ENCODE measurements at regions of chr3 and their contacts with region 1.

Region 1: DNA sequence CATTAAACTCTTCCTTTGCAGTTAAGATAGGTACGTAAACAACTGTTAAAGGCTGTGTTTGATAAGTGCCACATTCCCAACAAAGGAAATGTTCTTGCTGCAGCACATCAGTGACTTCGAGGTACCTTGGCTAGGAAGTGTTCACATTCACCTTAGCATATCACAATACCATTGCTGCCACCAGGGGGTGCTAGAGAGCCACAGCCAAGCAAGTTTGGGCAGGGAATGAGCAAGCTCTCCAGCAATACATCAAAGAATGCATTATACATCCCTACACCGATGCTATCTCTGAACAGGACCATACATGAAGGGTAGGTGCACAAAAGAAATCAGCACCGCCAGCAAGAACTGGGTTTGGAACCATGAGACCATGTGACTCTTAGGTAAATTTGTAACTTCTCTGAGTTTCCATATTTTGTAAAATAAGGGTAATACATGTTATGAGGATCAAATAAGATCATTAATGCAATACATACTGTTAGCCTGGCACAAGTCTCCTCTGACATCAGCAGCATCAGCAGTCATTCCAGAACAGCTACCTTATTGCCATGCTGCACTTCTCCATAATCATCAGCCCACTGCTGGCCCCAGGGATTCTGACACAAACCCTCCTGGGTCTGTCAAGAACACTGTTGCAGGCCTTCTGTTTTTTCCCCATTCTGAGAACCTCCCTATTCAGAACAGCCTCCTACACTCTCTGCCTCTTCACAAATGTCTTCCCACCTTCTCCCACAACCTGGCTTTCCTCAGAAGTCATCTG is 37.6 kb downstream of the RYK start:
- DNase-seq: peak; percentile 95
- H3K4me3 Mint-ChIP-seq: no peak overlapping the region
- H3K27ac Mint-ChIP-seq: no peak overlapping the region
- H3K4me1 Mint-ChIP-seq: peaks cover 23% of the 10 kb centered on the region
- H3K27me3 Mint-ChIP-seq: no peaks in the 10 kb centered on the region

Region 2: DNA sequence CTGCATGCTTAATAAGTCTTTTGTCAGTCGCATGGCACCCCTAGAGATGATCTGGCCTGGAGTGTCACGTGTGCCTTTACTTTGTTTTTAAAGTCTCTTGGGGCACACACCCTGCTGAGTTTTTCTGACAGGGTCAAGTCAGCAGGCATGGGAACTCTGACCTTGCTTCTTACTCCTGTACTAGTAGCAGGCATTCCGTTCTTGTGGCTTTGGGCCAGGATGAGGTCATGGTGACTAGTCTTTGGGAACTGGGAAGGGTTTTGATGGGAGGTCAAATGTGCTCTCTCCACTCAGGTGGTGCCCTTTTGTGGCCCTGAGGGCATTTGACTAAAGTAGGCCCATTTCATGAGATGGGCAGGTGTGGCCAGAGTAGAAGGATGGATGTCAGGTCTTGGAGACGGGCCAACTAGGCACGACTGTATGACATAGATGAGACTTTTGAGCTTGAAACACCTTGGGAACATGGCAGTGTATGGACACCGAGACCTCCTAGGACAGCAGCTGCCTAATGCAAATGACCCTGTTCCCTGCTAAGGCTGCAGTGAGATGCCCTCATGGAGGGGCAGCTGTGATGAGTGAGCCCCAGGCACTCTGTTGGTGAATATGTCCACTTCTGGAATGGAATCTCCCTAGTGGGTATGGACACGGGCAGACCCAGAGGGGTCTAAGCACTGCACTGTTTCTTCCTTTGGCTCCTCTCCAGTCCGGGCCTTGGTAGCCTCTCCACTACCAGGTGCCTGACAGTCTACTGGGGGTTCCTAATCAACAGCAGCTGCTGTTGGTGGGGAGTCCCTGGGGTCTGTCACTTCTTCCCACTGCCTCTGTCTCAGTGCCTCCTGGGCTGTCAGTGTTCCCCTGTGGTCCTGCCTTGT is 391.1 kb before region 1 on chr3:
- CTCF ChIA-PET with region 1: no interaction called
- intact Hi-C with region 1: loop called (anchors 1 kb)
- DNase-seq: no peak
- H3K4me3 Mint-ChIP-seq: no peak overlapping the region
- H3K27ac Mint-ChIP-seq: no peak overlapping the region
- H3K4me1 Mint-ChIP-seq: peaks cover 2% of the 10 kb centered on the region
- H3K27me3 Mint-ChIP-seq: no peaks in the 10 kb centered on the region

Region 3: GRCh38 chr3:134197681-134198261 is 15.3 kb before region 1 on chr3:
- CTCF ChIA-PET with region 1: interaction called, 81 read pairs
- intact Hi-C with region 1: loop called (anchors 1 kb)
- DNase-seq: peak; percentile 14
- H3K4me3 Mint-ChIP-seq: no peak overlapping the region
- H3K27ac Mint-ChIP-seq: no peak overlapping the region
- H3K4me1 Mint-ChIP-seq: peaks cover 7% of the 10 kb centered on the region
- H3K27me3 Mint-ChIP-seq: no peaks in the 10 kb centered on the region

Region 4: GRCh38 chr3:134239538-134239937 is 26.5 kb after region 1 on chr3:
- CTCF ChIA-PET with region 1: interaction called, 15 read pairs
- intact Hi-C with region 1: no loop called
- DNase-seq: peak; percentile 45
- H3K4me3 Mint-ChIP-seq: peak overlapping the region; percentile 30
- H3K27ac Mint-ChIP-seq: peak overlapping the region; percentile 88
- H3K4me1 Mint-ChIP-seq: peaks cover 94% of the 10 kb centered on the region
- H3K27me3 Mint-ChIP-seq: no peaks in the 10 kb centered on the region

Region 5: GRCh38 chr3:134299185-134299887 is 86.2 kb after region 1 on chr3:
- CTCF ChIA-PET with region 1: interaction called, 19 read pairs
- intact Hi-C with region 1: loop called (anchors 1 kb)
- DNase-seq: no peak
- H3K4me3 Mint-ChIP-seq: no peak overlapping the region
- H3K27ac Mint-ChIP-seq: no peak overlapping the region
- H3K4me1 Mint-ChIP-seq: no peaks in the 10 kb centered on the region
- H3K27me3 Mint-ChIP-seq: peaks cover 11% of the 10 kb centered on the region

Region 6: DNA sequence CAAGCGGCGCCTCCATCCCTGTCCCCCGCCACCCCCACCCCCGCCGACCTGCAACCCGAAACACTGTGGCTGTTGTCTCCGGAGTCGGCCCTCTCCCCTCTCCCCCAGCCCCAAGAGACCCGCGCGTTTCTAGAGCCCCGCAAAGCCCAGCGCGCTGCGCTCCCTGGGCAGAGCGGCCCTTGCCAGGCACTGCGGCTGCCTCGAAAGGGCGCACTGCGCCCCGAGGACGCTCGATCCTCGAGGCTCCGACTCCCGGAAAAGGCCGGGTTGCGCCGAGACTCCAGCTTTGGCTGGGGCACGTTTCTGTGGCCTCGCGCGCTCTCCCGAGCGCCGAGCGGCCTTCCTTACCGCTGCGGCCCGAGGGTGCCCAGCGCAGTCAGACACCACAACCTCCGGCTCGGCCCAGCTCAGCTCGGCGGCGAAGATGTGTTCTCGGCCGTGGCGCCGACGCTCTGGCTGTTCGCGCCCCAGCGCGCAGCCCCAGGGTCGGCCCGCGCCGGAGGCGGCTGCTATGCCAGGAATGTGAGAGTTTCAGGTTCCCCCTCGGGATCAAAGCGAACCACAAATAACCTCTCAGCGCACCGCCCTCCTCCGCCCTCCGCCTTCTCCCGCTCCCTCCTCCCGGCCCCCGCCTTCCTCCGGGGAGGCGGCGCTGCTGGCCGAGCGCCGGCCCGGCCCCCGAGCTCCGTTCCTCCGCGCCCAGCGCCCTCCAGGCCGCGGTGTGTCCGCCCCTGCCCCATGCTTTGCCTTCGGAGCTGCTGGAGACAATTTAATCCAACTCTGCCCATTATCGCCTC is 161.1 kb after region 1 on chr3 and contains the start of gene AMOTL2:
- CTCF ChIA-PET with region 1: interaction called, 3 read pairs
- intact Hi-C with region 1: loop called (anchors 1 kb)
- DNase-seq: peak; percentile 31
- H3K4me3 Mint-ChIP-seq: peak within 1 kb of the TSS; percentile 79
- H3K27ac Mint-ChIP-seq: no peak within 1 kb of the TSS
- H3K4me1 Mint-ChIP-seq: peaks cover 14% of the 10 kb centered on the region
- H3K27me3 Mint-ChIP-seq: peaks cover 28% of the 10 kb centered on the region
- total RNA-seq, gene AMOTL2: 0.31 TPM in 1 of 2 experiments, not detected in the other

Measured in activated naive CD4-positive, alpha-beta T cell treated with anti-CD3 and anti-CD28 coated beads for 36 hours (primary cell).